Naive thymus-derived CD4-positive, alpha-beta T cell (primary cell): ENCODE measurements at regions of chr6 and their contacts with region 1.

Region 1: DNA sequence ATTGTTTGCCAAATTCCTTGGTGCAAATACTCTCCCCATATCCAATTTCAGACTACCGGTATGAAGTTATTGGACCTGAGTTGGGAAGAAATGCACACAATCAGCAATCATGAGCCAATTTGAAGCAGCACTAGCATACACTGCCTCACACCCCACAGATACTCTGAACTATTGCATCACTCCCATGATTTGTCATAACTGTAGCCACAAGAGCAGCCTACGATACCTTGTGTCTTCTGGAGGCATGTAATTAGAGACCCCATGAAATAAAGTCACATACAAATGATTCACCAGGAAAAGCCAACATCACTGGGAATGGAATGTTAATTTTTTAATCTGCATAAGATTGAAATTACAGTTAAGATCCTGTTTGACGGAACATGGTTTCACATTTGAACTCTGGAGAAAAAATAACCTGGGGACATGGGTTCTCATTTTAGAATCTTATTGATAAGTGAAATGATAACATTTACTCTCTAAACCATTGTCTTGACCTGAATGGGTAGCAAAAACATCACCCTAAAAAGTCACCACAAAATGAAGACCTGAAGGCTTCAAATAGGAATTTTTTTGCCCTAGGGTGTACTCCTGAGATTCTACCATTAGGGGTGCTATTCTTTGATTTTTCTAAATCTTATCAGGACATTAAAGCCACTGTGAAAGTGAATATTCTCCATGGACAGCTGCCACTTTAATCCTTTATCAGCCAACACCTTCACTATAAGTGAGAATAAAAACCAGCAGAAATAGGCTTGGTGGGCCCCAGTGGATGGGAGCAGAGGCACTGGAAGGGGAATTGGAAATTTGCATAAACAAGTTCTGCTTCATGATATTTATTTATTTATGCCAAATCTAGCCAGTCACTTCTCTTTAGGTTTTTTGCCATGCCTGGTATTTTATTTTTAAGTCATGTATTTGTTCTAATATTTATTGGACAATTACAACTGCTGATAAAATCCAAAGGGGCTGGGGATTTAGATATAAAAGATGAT is 34.5 kb upstream of the HBS1L start:
- DNase-seq: peak in 4 of 9 donors; percentile 24 to 52 (median 36)
- ATAC-seq: peak; percentile 73
- H3K4me3 ChIP-seq: peak overlapping the region; percentile 50
- H3K4me3 Mint-ChIP-seq: peak overlapping the region; percentile 50 to 86 (median 66)
- H3K27ac ChIP-seq: peak overlapping the region; percentile 69
- H3K27ac Mint-ChIP-seq: peak overlapping the region; percentile 72 to 98 (median 95)
- H3K4me1 ChIP-seq: peaks cover 29 to 63% of the 10 kb centered on the region in 2 donors
- H3K4me1 Mint-ChIP-seq: peaks cover 43 to 98% (median 94%) of the 10 kb centered on the region in 7 donors
- H3K27me3 ChIP-seq: no peaks in the 10 kb centered on the region
- H3K27me3 Mint-ChIP-seq: no peaks in the 10 kb centered on the region

Region 2: GRCh38 chr6:135014353-135014832 is 74.7 kb before region 1 on chr6:
- CTCF ChIA-PET with region 1: interaction called, 4 read pairs
- POLR2A ChIA-PET with region 1: no interaction called
- intact Hi-C with region 1: loop called (anchors 2 kb)
- DNase-seq: peak in 7 of 9 donors; percentile 25 to 66 (median 52)
- ATAC-seq: peak; percentile 89
- H3K4me3 ChIP-seq: peak overlapping the region; percentile 8
- H3K4me3 Mint-ChIP-seq: peak overlapping the region; percentile 3 to 83 (median 71)
- H3K27ac ChIP-seq: peak overlapping the region; percentile 62
- H3K27ac Mint-ChIP-seq: peak overlapping the region; percentile 76 to 94 (median 85)
- H3K4me1 ChIP-seq: peaks cover 18 to 51% of the 10 kb centered on the region in 2 donors
- H3K4me1 Mint-ChIP-seq: peaks cover 43 to 85% (median 81%) of the 10 kb centered on the region in 7 donors
- H3K27me3 ChIP-seq: no peaks in the 10 kb centered on the region
- H3K27me3 Mint-ChIP-seq: no peaks in the 10 kb centered on the region

Region 3: DNA sequence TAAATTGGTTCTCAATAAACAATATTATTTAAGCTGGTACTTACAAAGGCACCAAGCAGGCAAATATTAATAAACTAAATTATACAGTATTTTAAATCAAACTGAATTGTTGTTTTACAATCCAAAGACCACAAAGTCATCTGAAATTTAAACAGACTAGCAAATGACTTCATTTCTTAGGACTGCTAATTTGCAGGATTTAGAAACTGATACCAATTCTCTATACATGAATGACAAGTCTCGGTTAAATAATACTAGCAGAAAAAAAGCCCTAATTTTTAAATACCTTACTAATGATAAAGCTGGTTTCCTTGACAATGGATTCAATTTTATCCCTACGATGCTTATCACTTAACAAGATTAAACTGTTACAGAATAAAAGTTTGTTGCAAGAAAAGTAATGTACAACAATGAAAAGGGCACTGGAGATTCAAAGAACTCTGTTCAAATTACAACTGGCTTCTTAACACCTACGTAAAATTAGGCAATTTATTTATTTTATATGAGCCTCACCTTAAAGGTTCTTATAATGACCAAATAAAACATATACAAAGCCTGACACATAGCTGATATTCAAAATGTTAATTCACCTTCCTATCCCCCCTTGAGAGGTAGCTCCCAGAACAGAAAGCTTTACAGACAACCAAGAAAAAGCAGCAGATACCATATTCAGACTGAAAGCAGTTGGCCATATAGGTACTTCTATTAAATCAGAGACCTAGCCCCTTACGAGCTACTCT is 67.6 kb before region 1 on chr6:
- CTCF ChIA-PET with region 1: interaction called, 4 read pairs
- POLR2A ChIA-PET with region 1: interaction called, 4 read pairs
- intact Hi-C with region 1: loop called in 1 of 2 experiments (anchors 2 kb)
- DNase-seq: no peak
- ATAC-seq: no peak
- H3K4me3 ChIP-seq: no peak overlapping the region
- H3K4me3 Mint-ChIP-seq: peak overlapping the region in 9 of 10 donors; percentile 2 to 75 (median 65)
- H3K27ac ChIP-seq: peak overlapping the region; percentile 57
- H3K27ac Mint-ChIP-seq: peak overlapping the region in 7 of 9 donors; percentile 19 to 91 (median 84)
- H3K4me1 ChIP-seq: peaks cover 0 to 43% of the 10 kb centered on the region in 2 donors
- H3K4me1 Mint-ChIP-seq: peaks cover 20 to 88% (median 77%) of the 10 kb centered on the region in 7 donors
- H3K27me3 ChIP-seq: no peaks in the 10 kb centered on the region
- H3K27me3 Mint-ChIP-seq: no peaks in the 10 kb centered on the region

Region 4: DNA sequence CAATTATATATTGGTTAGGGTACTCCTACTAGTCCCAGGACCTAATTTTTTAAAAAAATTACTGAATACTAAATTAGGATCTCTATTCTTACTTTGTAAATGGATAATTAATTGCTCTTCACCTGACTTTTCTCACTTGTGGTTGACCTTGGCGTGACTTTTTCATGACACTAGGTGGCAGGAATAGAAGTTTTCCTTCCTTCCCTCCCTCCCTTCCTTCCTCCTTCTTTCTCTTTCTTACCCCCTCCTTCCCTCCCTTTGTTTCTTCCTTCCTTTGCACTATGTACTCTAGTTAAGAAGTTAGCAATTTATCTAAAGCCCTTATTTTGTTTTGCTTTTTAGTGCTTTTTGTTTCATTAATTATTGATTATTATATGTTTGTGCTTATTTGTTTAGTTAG is 14.1 kb before region 1 on chr6:
- CTCF ChIA-PET with region 1: interaction called, 21 read pairs
- POLR2A ChIA-PET with region 1: interaction called, 9 read pairs
- intact Hi-C with region 1: loop called in 1 of 2 experiments (anchors 1 kb)
- DNase-seq: no peak
- ATAC-seq: no peak
- H3K4me3 ChIP-seq: no peak overlapping the region
- H3K4me3 Mint-ChIP-seq: peak overlapping the region in 1 of 10 donors; percentile 28
- H3K27ac ChIP-seq: no peak overlapping the region
- H3K27ac Mint-ChIP-seq: peak overlapping the region in 1 of 9 donors; percentile 9
- H3K4me1 ChIP-seq: peaks cover 0 to 3% of the 10 kb centered on the region in 2 donors
- H3K4me1 Mint-ChIP-seq: peaks cover 5 to 24% (median 19%) of the 10 kb centered on the region in 7 donors
- H3K27me3 ChIP-seq: no peaks in the 10 kb centered on the region
- H3K27me3 Mint-ChIP-seq: no peaks in the 10 kb centered on the region

Region 5: DNA sequence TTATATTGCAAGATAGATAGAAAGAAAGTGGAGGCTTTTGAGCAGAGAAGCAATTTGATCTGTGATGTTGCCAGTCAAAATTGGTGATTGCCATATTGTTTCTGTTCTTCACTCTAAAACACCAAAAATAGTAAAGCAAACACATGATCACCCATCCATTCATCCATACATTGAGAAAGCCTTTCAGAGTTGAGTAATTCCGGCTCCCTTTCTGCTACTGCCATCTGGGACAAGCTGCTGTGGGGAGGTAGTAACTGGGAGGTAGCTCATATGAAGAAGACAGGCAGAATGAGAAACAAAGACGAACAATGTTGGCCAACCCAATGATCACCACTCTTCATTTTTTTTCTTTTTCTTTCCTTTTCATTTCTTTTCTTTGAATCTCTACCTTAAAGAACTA is 16.6 kb after region 1 on chr6:
- CTCF ChIA-PET with region 1: interaction called, 11 read pairs
- POLR2A ChIA-PET with region 1: interaction called, 149 read pairs
- intact Hi-C with region 1: loop called (anchors 1 kb)
- DNase-seq: no peak
- ATAC-seq: no peak
- H3K4me3 ChIP-seq: no peak overlapping the region
- H3K4me3 Mint-ChIP-seq: peak overlapping the region in 2 of 10 donors; percentile 8 to 83
- H3K27ac ChIP-seq: no peak overlapping the region
- H3K27ac Mint-ChIP-seq: peak overlapping the region in 8 of 9 donors; percentile 77 to 97 (median 90)
- H3K4me1 ChIP-seq: peaks cover 28 to 45% of the 10 kb centered on the region in 2 donors
- H3K4me1 Mint-ChIP-seq: peaks cover 31 to 83% (median 73%) of the 10 kb centered on the region in 7 donors
- H3K27me3 ChIP-seq: no peaks in the 10 kb centered on the region
- H3K27me3 Mint-ChIP-seq: no peaks in the 10 kb centered on the region

Region 6: GRCh38 chr6:135114355-135115145 is 25.4 kb after region 1 on chr6:
- CTCF ChIA-PET with region 1: interaction called, 4 read pairs
- POLR2A ChIA-PET with region 1: interaction called, 8 read pairs
- intact Hi-C with region 1: loop called (anchors 1 kb)
- DNase-seq: no peak
- ATAC-seq: no peak
- H3K4me3 ChIP-seq: no peak overlapping the region
- H3K4me3 Mint-ChIP-seq: peak overlapping the region in 8 of 10 donors; percentile 7 to 83 (median 36)
- H3K27ac ChIP-seq: no peak overlapping the region
- H3K27ac Mint-ChIP-seq: peak overlapping the region in 7 of 9 donors; percentile 6 to 92 (median 49)
- H3K4me1 ChIP-seq: peaks cover 19 to 42% of the 10 kb centered on the region in 2 donors
- H3K4me1 Mint-ChIP-seq: peaks cover 26 to 88% (median 76%) of the 10 kb centered on the region in 7 donors
- H3K27me3 ChIP-seq: no peaks in the 10 kb centered on the region
- H3K27me3 Mint-ChIP-seq: peaks cover 0 to 7% (median 0%) of the 10 kb centered on the region in 5 donors

Region 7: GRCh38 chr6:135128268-135128914 is 39.3 kb after region 1 on chr6:
- CTCF ChIA-PET with region 1: interaction called, 6 read pairs
- POLR2A ChIA-PET with region 1: interaction called, 30 read pairs
- intact Hi-C with region 1: loop called (anchors 1 kb)
- DNase-seq: peak in 8 of 9 donors; percentile 53 to 73 (median 66)
- ATAC-seq: peak; percentile 92
- H3K4me3 ChIP-seq: peak overlapping the region; percentile 36
- H3K4me3 Mint-ChIP-seq: peak overlapping the region; percentile 46 to 93 (median 77)
- H3K27ac ChIP-seq: peak overlapping the region; percentile 75
- H3K27ac Mint-ChIP-seq: peak overlapping the region; percentile 95 to 98 (median 97)
- H3K4me1 ChIP-seq: peaks cover 18 to 22% of the 10 kb centered on the region in 2 donors
- H3K4me1 Mint-ChIP-seq: peaks cover 26 to 64% (median 55%) of the 10 kb centered on the region in 7 donors
- H3K27me3 ChIP-seq: no peaks in the 10 kb centered on the region
- H3K27me3 Mint-ChIP-seq: no peaks in the 10 kb centered on the region

Region 8: DNA sequence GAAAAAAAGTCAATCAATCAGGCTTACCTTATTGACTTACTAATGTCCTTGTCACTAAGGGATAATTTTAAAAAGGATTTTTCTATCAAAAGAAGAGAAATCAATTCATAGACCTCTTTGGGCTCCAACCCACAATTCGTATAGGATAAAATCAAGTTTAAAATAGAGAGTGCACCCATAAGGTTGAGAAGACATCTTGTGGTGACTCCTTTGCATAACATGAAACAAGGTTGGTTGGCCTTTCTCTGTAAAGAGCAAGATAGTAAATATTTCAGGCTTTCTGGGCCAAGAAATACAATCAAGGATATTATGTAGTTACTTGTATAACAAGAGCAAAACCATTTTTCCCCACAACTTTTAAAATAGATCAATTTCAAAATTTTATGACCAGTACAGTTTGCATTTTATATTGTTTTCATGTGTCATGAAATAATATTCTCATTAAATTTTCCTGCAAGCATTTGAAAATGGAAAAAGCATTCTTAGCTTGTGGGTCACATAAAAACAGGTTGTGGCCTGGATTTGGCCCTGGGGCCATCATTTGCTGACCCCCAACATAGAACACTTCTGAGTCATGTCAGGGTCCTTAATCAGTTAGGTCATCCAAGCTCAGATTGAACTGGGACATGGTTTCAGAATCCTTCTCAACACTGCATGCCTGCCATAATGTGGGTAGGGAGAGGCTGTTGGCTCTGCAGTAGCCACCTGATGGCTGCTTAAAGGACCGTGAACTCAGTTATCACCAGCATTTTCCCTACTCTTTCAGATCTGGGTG is 168.7 kb after region 1 on chr6:
- CTCF ChIA-PET with region 1: no interaction called
- POLR2A ChIA-PET with region 1: no interaction called
- intact Hi-C with region 1: no loop called
- DNase-seq: peak in 3 of 9 donors; percentile 4 to 24 (median 12)
- ATAC-seq: no peak
- H3K4me3 ChIP-seq: no peak overlapping the region
- H3K4me3 Mint-ChIP-seq: no peak overlapping the region
- H3K27ac ChIP-seq: no peak overlapping the region
- H3K27ac Mint-ChIP-seq: no peak overlapping the region
- H3K4me1 ChIP-seq: no peaks in the 10 kb centered on the region
- H3K4me1 Mint-ChIP-seq: peaks cover 0 to 4% (median 0%) of the 10 kb centered on the region in 7 donors
- H3K27me3 ChIP-seq: no peaks in the 10 kb centered on the region
- H3K27me3 Mint-ChIP-seq: peaks cover 0 to 10% (median 7%) of the 10 kb centered on the region in 5 donors

Region 9: DNA sequence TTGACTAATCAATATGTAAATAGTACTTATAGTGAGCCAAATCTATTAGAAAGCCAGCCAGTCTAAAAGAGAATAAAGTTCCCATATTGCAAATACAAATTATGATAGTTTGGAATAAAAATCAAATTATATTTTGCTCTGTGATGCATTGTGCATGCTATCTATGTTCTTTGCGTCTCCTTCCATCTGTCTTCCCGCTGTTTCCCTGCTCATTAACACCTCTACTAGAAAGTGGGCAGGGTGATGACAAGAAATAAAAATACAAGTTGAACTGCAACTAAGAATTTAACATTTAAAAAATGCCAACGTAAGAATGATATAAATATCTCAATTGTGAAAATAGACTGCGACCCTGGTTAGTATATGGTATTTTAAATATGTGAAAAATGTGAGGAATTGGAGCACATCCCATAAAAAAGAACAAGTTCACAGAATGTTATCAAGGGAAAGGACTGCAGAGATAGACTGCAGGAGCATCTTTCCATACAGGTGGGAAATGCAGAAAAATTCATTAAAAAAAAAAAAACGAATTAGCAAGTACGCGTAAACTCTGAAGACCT is 604.8 kb after region 1 on chr6:
- CTCF ChIA-PET with region 1: no interaction called
- POLR2A ChIA-PET with region 1: no interaction called
- intact Hi-C with region 1: no loop called
- DNase-seq: no peak
- ATAC-seq: no peak
- H3K4me3 ChIP-seq: no peak overlapping the region
- H3K4me3 Mint-ChIP-seq: no peak overlapping the region
- H3K27ac ChIP-seq: no peak overlapping the region
- H3K27ac Mint-ChIP-seq: no peak overlapping the region
- H3K4me1 ChIP-seq: no peaks in the 10 kb centered on the region
- H3K4me1 Mint-ChIP-seq: peaks cover 0 to 7% (median 0%) of the 10 kb centered on the region in 7 donors
- H3K27me3 ChIP-seq: no peaks in the 10 kb centered on the region
- H3K27me3 Mint-ChIP-seq: peaks cover 0 to 4% (median 0%) of the 10 kb centered on the region in 5 donors

Region 10: GRCh38 chr6:136792410-136793262 is 1703.5 kb after region 1 on chr6 and contains the start of gene MAP3K5:
- CTCF ChIA-PET with region 1: no interaction called
- POLR2A ChIA-PET with region 1: no interaction called
- intact Hi-C with region 1: no loop called
- DNase-seq: peak; percentile 89 to 96 (median 94)
- ATAC-seq: peak; percentile 87
- H3K4me3 ChIP-seq: peak within 1 kb of the TSS; percentile 100
- H3K4me3 Mint-ChIP-seq: peak within 1 kb of the TSS; percentile 90 to 97 (median 94)
- H3K27ac ChIP-seq: peak within 1 kb of the TSS; percentile 97
- H3K27ac Mint-ChIP-seq: peak within 1 kb of the TSS; percentile 92 to 99 (median 95)
- H3K4me1 ChIP-seq: peaks cover 13 to 18% of the 10 kb centered on the region in 2 donors
- H3K4me1 Mint-ChIP-seq: peaks cover 19 to 40% (median 35%) of the 10 kb centered on the region in 7 donors
- H3K27me3 ChIP-seq: no peaks in the 10 kb centered on the region
- H3K27me3 Mint-ChIP-seq: peaks cover 0 to 3% (median 0%) of the 10 kb centered on the region in 5 donors
- total RNA-seq, gene MAP3K5: 12.9 to 32.5 (median 14.0) TPM